BJ (cell line): ENCODE measurements at regions of chr20 and their contacts with region 1.

Region 1: GRCh38 chr20:50815162-50815989 is 20.5 kb downstream of the BCAS4 start:
- DNase-seq: no peak
- H3K4me3 ChIP-seq: no peak overlapping the region
- H3K27me3 ChIP-seq: no peaks in the 10 kb centered on the region
- CTCF ChIP-seq: no peak

Region 2: GRCh38 chr20:50861990-50862389 is 46.6 kb after region 1 on chr20:
- CTCF ChIA-PET with region 1: no interaction called
- POLR2A ChIA-PET with region 1: interaction called, 10 read pairs
- DNase-seq: no peak
- H3K4me3 ChIP-seq: no peak overlapping the region
- H3K27me3 ChIP-seq: no peaks in the 10 kb centered on the region
- CTCF ChIP-seq: no peak

Region 3: GRCh38 chr20:50958615-50959542 is 143.5 kb after region 1 on chr20 and contains the start of gene MOCS3:
- CTCF ChIA-PET with region 1: interaction called, 12 read pairs
- POLR2A ChIA-PET with region 1: no interaction called
- DNase-seq: peak; percentile 48
- H3K4me3 ChIP-seq: peak within 1 kb of the TSS; percentile 92
- H3K27me3 ChIP-seq: no peaks in the 10 kb centered on the region
- CTCF ChIP-seq: no peak
- polyA plus RNA-seq, gene MOCS3: 3.4 and 3.8 TPM in 2 replicates